Endothelial cell of umbilical vein (primary cell): ENCODE measurements at regions of chr20 and their contacts with region 1.

Region 1: DNA sequence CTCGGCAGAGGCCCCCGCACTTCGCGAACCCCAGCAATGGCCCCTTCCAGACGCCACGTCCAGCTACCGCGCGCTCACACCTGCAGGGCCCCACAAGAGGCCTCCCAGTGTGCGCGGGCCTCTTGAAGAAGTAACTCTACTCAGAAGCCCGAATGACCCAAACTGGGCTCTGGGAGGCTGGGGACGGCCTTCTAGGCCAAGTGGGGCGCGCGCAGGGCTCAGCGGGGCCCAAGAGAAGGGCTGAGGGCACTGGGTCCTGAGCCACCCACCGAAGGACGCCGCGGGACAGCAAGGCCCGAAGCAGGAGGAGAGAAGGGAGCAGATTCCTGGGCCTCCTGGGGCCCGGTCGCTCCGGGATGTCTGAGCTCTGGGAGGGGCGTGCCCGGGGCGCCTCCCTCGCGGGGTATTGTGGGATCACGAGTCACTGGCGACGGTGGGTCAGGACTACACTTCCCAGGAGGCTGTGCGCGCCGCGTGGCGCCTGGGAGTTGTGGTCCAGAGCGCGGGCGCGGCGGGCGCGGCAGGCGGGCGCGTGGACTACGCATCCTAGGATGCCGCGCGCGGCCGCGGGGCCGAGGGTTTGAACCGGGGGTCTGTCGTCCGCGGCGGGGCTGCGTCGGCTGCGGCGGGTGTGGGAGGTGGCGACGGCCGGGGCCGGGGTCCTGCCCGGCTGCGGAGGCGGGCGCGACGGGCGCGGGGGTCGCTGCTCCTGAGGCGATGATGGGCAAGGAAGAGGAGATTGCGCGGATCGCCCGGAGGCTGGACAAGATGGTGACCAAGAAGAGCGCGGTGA is at the start of gene TCEA2:
- DNase-seq: peak; percentile 93
- H3K4me3 ChIP-seq: peak within 1 kb of the TSS; percentile 72 to 91 (median 84)
- H3K27ac ChIP-seq: peak within 1 kb of the TSS; percentile 63
- H3K4me1 ChIP-seq: peaks cover 18% of the 10 kb centered on the region
- H3K27me3 ChIP-seq: no peaks in the 10 kb centered on the region
- CTCF ChIP-seq: no peak
- POLR2A ChIP-seq: peak; percentile 87
- total RNA-seq, gene TCEA2: 65.5 and 71.3 TPM in 2 replicates

Region 2: GRCh38 chr20:63894358-63895201 is 168.2 kb before region 1 on chr20 and contains the start of gene DNAJC5:
- CTCF ChIA-PET with region 1: no interaction called
- POLR2A ChIA-PET with region 1: no interaction called
- dilution Hi-C with region 1: no loop called
- intact Hi-C with region 1: loop called (anchors 10 kb)
- DNase-seq: peak; percentile 91
- H3K4me3 ChIP-seq: peak within 1 kb of the TSS; percentile 67 to 98 (median 86)
- H3K27ac ChIP-seq: peak within 1 kb of the TSS; percentile 66
- H3K4me1 ChIP-seq: peaks cover 14% of the 10 kb centered on the region
- H3K27me3 ChIP-seq: no peaks in the 10 kb centered on the region
- CTCF ChIP-seq: no peak
- POLR2A ChIP-seq: no peak
- total RNA-seq, gene DNAJC5: 58.7 and 60.3 TPM in 2 replicates

Region 3: GRCh38 chr20:63911176-63911575 is 151.6 kb before region 1 on chr20:
- CTCF ChIA-PET with region 1: no interaction called
- POLR2A ChIA-PET with region 1: no interaction called
- dilution Hi-C with region 1: no loop called
- intact Hi-C with region 1: no loop called
- DNase-seq: no peak
- H3K4me3 ChIP-seq: no peak overlapping the region
- H3K27ac ChIP-seq: no peak overlapping the region
- H3K4me1 ChIP-seq: no peaks in the 10 kb centered on the region
- H3K27me3 ChIP-seq: no peaks in the 10 kb centered on the region
- CTCF ChIP-seq: no peak
- POLR2A ChIP-seq: no peak

Region 4: DNA sequence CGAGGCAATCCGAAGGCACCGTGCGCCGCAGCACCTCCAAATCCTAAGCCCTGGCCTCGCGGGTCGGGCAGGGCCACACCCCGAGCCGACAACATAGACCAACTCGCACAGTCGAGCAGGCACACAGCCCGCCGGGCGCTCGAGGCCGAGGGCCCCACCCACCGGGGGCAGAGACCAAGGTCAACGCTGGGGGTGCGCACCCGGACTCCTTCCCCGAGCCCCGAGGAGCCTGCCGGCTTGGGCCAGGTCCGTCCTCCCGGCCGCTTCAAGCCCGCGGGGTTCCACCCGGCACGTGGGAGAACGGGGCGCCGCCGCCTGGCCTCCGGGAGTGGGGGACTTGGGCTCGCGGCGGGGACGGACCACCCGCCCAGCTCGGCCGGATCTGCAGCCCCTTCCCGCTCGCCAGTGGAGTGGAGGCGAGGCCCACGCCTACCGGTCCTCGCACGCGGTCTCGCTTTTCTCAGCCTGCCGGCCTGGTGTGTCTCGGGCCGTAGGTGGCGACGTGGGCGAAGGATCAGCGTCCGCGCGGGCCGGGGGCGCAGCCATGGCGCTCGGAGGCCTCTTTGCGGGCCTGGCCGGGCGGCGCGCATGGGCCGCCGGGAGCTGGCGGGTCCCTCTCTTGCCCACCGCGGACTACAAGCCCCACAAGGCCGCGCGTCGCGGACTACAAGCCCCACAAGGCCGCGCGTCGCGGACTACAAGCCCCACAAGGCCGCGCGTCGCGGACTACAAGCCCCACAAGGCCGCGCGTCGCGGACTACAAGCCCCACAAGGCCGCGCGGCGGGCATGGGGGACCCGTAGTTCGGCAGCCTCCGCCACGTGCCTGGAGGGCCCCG is 106.7 kb before region 1 on chr20 and contains the start of gene UCKL1:
- CTCF ChIA-PET with region 1: no interaction called
- POLR2A ChIA-PET with region 1: no interaction called
- dilution Hi-C with region 1: no loop called
- intact Hi-C with region 1: loop called (anchors 2 kb)
- DNase-seq: peak; percentile 93
- H3K4me3 ChIP-seq: peak within 1 kb of the TSS; percentile 38 to 78 (median 76)
- H3K27ac ChIP-seq: peak within 1 kb of the TSS; percentile 42
- H3K4me1 ChIP-seq: peaks cover 10% of the 10 kb centered on the region
- H3K27me3 ChIP-seq: no peaks in the 10 kb centered on the region
- CTCF ChIP-seq: no peak
- POLR2A ChIP-seq: peak; percentile 89
- total RNA-seq, gene UCKL1: 51.1 TPM in 2 replicates

Region 5: GRCh38 chr20:63980806-63981728 is 81.7 kb before region 1 on chr20 and contains the start of gene PRPF6:
- CTCF ChIA-PET with region 1: interaction called, 33 read pairs
- POLR2A ChIA-PET with region 1: interaction called, 3 read pairs
- dilution Hi-C with region 1: no loop called
- intact Hi-C with region 1: loop called (anchors 1 kb)
- DNase-seq: peak; percentile 94
- H3K4me3 ChIP-seq: peak within 1 kb of the TSS; percentile 25 to 67 (median 58)
- H3K27ac ChIP-seq: peak within 1 kb of the TSS; percentile 6
- H3K4me1 ChIP-seq: peaks cover 20% of the 10 kb centered on the region
- H3K27me3 ChIP-seq: no peaks in the 10 kb centered on the region
- CTCF ChIP-seq: peak; percentile 87 to 95
- POLR2A ChIP-seq: peak; percentile 66
- total RNA-seq, gene PRPF6: 64.2 and 67.4 TPM in 2 replicates